Endothelial cell of umbilical vein (primary cell): ENCODE measurements at regions of chr7 and their contacts with region 1.

Region 1: GRCh38 chr7:40057292-40057691 is 77.1 kb downstream of the MPLKIP start:
- DNase-seq: no peak
- H3K4me3 ChIP-seq: no peak overlapping the region
- H3K27ac ChIP-seq: no peak overlapping the region
- H3K4me1 ChIP-seq: no peaks in the 10 kb centered on the region
- H3K27me3 ChIP-seq: no peaks in the 10 kb centered on the region
- CTCF ChIP-seq: no peak
- POLR2A ChIP-seq: no peak

Region 2: DNA sequence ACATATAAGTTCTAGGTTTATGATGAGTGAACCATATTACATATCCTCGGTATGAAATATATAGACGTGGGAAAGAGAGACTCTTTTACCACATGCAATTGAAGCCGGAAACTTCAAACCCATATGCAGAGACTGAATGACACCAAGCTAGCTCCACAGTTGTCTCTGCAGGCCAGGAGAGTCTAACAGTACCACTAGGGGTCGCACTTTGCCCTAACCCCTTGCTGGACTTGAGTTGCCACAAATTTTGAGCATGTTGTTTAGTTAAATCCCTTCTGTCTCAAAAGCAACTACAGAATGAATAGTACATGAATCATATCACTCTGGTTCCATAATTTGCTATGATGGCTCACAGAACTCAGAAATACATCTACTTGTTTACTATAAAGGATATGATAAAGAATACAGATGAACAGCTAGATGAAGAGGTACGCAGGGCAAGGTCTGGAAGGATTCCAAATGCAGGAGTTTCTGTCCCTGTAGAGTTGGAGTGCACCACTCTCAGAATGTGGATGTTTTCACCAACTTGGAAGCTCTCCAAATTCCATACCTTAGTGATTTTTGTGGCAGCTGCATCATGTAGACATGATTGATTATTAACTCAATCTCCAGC is 603.4 kb before region 1 on chr7:
- CTCF ChIA-PET with region 1: interaction called, 13 read pairs
- POLR2A ChIA-PET with region 1: no interaction called
- dilution Hi-C with region 1: no loop called
- intact Hi-C with region 1: loop called (anchors 5 kb)
- DNase-seq: peak; percentile 66
- H3K4me3 ChIP-seq: no peak overlapping the region
- H3K27ac ChIP-seq: no peak overlapping the region
- H3K4me1 ChIP-seq: no peaks in the 10 kb centered on the region
- H3K27me3 ChIP-seq: peaks cover 6 to 7% of the 10 kb centered on the region in 2 experiments
- CTCF ChIP-seq: peak; percentile 84 to 90
- POLR2A ChIP-seq: no peak

Region 3: DNA sequence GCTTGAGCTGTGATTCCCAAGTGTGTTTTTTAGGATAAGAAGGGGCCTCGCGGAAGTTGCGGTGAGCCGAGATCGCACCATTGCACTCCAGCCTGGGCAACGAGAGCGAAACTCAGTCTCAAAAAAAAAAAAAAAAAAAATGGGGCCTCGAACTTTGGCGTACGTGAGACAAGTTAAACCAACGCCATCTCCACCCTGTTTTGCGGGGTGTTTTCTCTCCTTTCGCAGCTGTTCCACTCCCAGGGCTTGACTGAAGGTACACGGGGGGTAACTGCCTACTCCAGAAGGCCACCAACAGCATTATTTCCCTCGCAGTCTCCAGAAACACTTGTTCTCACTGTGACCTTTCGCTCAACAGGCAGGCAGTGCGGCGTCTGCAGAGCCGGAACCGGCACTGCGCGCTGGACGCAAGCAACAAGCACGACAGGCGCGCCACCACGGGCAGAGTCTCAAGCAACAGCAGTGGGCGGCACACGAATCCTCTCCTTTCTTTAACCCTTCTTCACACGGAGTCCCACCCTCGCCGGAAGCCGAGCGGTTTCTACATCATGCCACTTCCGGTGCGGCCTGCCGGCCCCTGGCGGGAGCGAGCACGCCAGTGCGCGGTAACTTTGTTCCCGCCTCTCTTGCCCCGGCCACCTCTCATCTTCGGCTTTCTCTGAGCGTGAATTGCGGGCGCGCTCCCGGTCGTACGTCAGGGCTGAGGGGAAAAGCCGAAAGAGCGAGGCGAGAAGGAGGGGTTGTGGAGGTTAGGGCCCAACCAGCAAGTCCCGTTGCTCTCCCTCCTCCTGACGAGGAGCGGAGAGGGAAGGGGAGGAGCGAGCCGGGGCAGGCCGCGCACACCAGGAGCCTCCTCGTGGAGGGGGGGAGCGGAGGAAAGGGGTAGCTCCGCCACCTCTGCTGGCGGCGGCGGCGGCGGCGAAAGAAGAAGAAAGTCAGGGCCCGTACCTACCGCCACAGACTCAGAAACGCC is 108.0 kb before region 1 on chr7:
- CTCF ChIA-PET with region 1: interaction called, 62 read pairs
- POLR2A ChIA-PET with region 1: no interaction called
- dilution Hi-C with region 1: no loop called
- intact Hi-C with region 1: loop called (anchors 1 kb)
- DNase-seq: peak; percentile 100
- H3K4me3 ChIP-seq: peak overlapping the region; percentile 0 to 76 (median 73)
- H3K27ac ChIP-seq: peak overlapping the region; percentile 81
- H3K4me1 ChIP-seq: peaks cover 19% of the 10 kb centered on the region
- H3K27me3 ChIP-seq: no peaks in the 10 kb centered on the region
- CTCF ChIP-seq: no peak
- POLR2A ChIP-seq: peak; percentile 95

Region 4: GRCh38 chr7:39958038-39958437 is 99.3 kb before region 1 on chr7:
- CTCF ChIA-PET with region 1: interaction called, 62 read pairs
- POLR2A ChIA-PET with region 1: interaction called, 3 read pairs
- dilution Hi-C with region 1: no loop called
- intact Hi-C with region 1: no loop called
- DNase-seq: no peak
- H3K4me3 ChIP-seq: no peak overlapping the region
- H3K27ac ChIP-seq: no peak overlapping the region
- H3K4me1 ChIP-seq: peaks cover 12% of the 10 kb centered on the region
- H3K27me3 ChIP-seq: no peaks in the 10 kb centered on the region
- CTCF ChIP-seq: no peak
- POLR2A ChIP-seq: no peak

Region 5: GRCh38 chr7:40003597-40003996 is 53.7 kb before region 1 on chr7:
- CTCF ChIA-PET with region 1: interaction called, 10 read pairs
- POLR2A ChIA-PET with region 1: no interaction called
- dilution Hi-C with region 1: no loop called
- intact Hi-C with region 1: no loop called
- DNase-seq: no peak
- H3K4me3 ChIP-seq: no peak overlapping the region
- H3K27ac ChIP-seq: no peak overlapping the region
- H3K4me1 ChIP-seq: no peaks in the 10 kb centered on the region
- H3K27me3 ChIP-seq: no peaks in the 10 kb centered on the region
- CTCF ChIP-seq: no peak
- POLR2A ChIP-seq: no peak

Region 6: DNA sequence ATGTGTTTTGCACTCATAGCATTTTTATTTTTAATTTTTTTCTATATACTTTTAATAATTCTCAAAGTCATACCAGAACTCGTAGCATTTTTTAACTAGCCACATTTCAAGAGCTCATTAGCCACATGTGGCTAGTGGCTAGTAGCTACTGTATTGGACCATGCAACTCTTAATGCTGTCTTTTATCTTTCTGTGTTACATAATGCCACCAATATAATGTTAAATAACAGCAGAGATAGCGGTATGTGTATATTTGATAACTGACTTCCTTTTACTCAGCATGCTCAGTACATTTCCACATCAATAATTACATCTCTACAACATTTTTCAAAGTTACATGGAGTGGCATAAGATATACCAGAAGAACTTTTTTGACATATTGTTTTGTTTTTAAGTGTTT is 15.8 kb before region 1 on chr7:
- CTCF ChIA-PET with region 1: interaction called, 17 read pairs
- POLR2A ChIA-PET with region 1: no interaction called
- dilution Hi-C with region 1: no loop called
- intact Hi-C with region 1: no loop called
- DNase-seq: no peak
- H3K4me3 ChIP-seq: no peak overlapping the region
- H3K27ac ChIP-seq: no peak overlapping the region
- H3K4me1 ChIP-seq: no peaks in the 10 kb centered on the region
- H3K27me3 ChIP-seq: no peaks in the 10 kb centered on the region
- CTCF ChIP-seq: no peak
- POLR2A ChIP-seq: no peak

Region 7: GRCh38 chr7:41003031-41003925 is 946.0 kb after region 1 on chr7:
- CTCF ChIA-PET with region 1: no interaction called
- POLR2A ChIA-PET with region 1: no interaction called
- dilution Hi-C with region 1: no loop called
- intact Hi-C with region 1: no loop called
- DNase-seq: peak; percentile 80
- H3K4me3 ChIP-seq: no peak overlapping the region
- H3K27ac ChIP-seq: no peak overlapping the region
- H3K4me1 ChIP-seq: no peaks in the 10 kb centered on the region
- H3K27me3 ChIP-seq: no peaks in the 10 kb centered on the region
- CTCF ChIP-seq: peak; percentile 73 to 77
- POLR2A ChIP-seq: no peak